ENCODE measurements at regions of chr3 and their contacts with region 1.

Region 1: DNA sequence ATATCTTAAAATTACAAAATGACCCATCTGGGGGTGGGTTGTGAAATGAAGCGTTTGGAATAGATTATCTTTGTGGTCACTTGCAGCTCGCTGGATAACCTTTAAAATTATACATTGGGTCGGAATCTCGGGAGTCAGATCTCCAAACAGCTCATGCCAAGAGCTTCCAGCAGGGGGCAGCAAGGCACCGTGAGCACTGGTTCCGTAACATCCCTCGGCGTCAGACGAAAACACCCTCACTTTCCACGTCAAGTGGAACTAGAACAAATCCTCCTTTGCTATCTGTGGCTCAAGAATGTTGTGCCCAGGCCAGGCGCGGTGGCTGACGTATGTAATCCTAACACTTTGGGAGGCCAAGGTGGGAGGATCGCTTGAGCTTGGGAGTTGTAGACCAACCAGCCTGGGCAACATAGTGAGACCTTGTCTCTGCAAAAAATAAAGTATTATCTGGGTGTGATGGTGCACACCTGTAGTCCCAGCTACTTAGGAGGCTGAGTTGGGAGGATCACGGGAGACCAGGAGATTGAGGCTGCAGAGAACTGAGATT is 31.1 kb downstream of the UMPS start:
- DNase-seq: peak; percentile 46
- H3K4me3 ChIP-seq: no peak overlapping the region
- H3K27ac ChIP-seq: no peak overlapping the region
- H3K4me1 ChIP-seq: no peaks in the 10 kb centered on the region
- H3K27me3 ChIP-seq: no peaks in the 10 kb centered on the region
- CTCF ChIP-seq: peak; percentile 95 to 98

Region 2: GRCh38 chr3:124887177-124887931 is 126.0 kb after region 1 on chr3 and contains the start of gene ITGB5:
- CTCF ChIA-PET with region 1: interaction called, 11 read pairs
- dilution Hi-C with region 1: loop called (anchors 5 kb)
- in situ Hi-C with region 1: no loop called
- intact Hi-C with region 1: loop called (anchors 5 kb)
- DNase-seq: peak; percentile 80
- H3K4me3 ChIP-seq: peak within 1 kb of the TSS; percentile 64 to 85 (median 80)
- H3K27ac ChIP-seq: peak within 1 kb of the TSS; percentile 76
- H3K4me1 ChIP-seq: peaks cover 62% of the 10 kb centered on the region
- H3K27me3 ChIP-seq: no peaks in the 10 kb centered on the region
- CTCF ChIP-seq: no peak
- total RNA-seq, gene ITGB5: 110 to 172 TPM

Region 3: GRCh38 chr3:124986158-124987143 is 225.1 kb after region 1 on chr3:
- CTCF ChIA-PET with region 1: no interaction called
- dilution Hi-C with region 1: no loop called
- in situ Hi-C with region 1: no loop called
- intact Hi-C with region 1: loop called (anchors 2 kb)
- DNase-seq: peak; percentile 71
- H3K4me3 ChIP-seq: no peak overlapping the region
- H3K27ac ChIP-seq: peak overlapping the region; percentile 62
- H3K4me1 ChIP-seq: peaks cover 19% of the 10 kb centered on the region
- H3K27me3 ChIP-seq: no peaks in the 10 kb centered on the region
- CTCF ChIP-seq: peak; percentile 49 to 63

Region 4: DNA sequence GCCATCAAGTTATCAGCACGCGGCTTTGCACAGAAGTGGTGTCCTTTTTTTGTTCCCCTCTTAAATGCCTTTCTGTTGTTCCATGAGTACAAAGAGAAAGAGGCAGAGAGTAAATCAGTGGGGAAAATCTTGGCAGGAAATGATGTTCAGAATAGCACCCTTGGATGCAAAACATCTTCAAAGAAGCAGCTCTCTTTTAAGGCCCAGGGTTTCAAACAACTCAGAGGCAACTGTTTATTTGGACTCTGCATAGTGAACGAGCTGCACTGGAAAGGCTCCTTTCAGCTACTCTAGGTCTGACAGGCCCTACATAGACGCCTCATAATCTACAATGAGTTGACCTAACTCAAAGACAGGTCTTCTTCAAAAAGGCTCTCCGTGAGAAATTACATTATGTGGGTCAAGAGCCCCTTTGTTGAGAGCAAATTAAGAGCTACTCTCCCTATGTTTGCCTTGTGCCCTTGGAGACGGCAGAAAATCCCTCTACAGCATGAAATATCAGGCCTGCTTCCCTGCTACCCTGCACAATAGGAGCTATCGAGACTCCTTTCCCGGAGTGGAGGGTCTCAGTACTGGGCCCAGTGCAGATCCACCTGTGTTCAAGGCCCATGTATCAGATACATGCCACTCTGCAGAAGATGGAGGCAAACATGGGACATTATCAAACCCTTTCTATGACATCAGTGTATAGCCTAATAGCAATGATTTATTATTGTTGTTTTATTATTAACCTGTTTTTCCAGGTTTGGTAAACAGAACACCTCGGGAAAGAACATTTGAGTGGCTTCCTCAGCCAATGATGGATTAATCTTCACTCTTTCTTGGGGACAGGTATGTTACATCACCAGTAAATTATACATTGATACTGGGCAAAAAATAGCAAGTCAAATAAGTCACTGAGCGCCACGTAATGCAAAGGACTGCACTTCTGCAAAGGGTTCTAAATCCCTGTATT is 241.4 kb after region 1 on chr3:
- CTCF ChIA-PET with region 1: no interaction called
- dilution Hi-C with region 1: no loop called
- in situ Hi-C with region 1: no loop called
- intact Hi-C with region 1: no loop called
- DNase-seq: no peak
- H3K4me3 ChIP-seq: no peak overlapping the region
- H3K27ac ChIP-seq: no peak overlapping the region
- H3K4me1 ChIP-seq: no peaks in the 10 kb centered on the region
- H3K27me3 ChIP-seq: no peaks in the 10 kb centered on the region
- CTCF ChIP-seq: no peak

Measured in mammary epithelial cell (primary cell).